B cell (primary cell): ENCODE measurements at regions of chr21 and their contacts with region 1.

Region 1: DNA sequence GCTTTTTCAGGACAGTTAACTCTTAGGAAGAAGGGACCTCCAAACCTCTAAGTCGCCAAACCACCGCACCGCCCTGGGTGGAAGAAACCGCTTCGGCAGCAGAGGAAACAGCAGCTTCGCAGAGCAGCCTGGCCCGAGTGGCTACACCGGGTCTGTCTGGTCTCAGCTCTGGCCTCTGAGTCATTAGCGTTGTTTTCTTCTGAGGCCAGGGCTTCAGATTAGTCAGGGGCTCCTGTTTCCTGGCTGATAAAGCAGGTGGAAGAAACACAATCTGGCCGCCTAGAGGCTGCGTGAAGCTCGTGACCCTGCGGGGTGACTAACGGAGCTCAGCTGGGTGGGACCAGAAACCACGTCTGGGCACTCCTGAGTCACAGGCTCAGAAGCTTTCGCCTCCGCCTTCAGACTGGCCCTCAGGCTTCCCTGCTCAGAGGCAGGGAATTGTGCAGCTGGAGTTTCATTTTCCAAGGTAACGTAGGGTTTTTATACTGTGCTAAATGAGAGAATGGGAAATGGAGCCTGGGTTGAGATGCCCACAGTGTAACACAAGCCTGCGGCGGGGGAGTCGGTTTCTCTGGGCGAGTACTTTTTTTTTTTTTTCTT is 44.9 kb downstream of the CHAF1B start:
- DNase-seq: peak; percentile 62
- ATAC-seq: peak; percentile 94
- H3K4me3 ChIP-seq: peak overlapping the region in 4 of 5 experiments; percentile 0 to 50 (median 40)
- H3K4me3 Mint-ChIP-seq: peak overlapping the region; percentile 88
- H3K27ac ChIP-seq: no peak overlapping the region
- H3K27ac Mint-ChIP-seq: peak overlapping the region; percentile 95
- H3K4me1 ChIP-seq: peaks cover 12 to 13% of the 10 kb centered on the region in 2 donors
- H3K4me1 Mint-ChIP-seq: peaks cover 20% of the 10 kb centered on the region
- H3K27me3 ChIP-seq: peaks cover 0 to 22% (median 5%) of the 10 kb centered on the region in 4 experiments
- H3K27me3 Mint-ChIP-seq: peaks cover 36% of the 10 kb centered on the region
- CTCF ChIP-seq: no peak

Region 2: GRCh38 chr21:36419996-36420395 is 10.1 kb before region 1 on chr21:
- CTCF ChIA-PET with region 1: interaction called, 3 read pairs
- POLR2A ChIA-PET with region 1: no interaction called
- intact Hi-C with region 1: loop called (anchors 1 kb)
- DNase-seq: peak; percentile 52
- ATAC-seq: peak; percentile 58
- H3K4me3 ChIP-seq: no peak overlapping the region
- H3K4me3 Mint-ChIP-seq: no peak overlapping the region
- H3K27ac ChIP-seq: no peak overlapping the region
- H3K27ac Mint-ChIP-seq: no peak overlapping the region
- H3K4me1 ChIP-seq: no peaks in the 10 kb centered on the region
- H3K4me1 Mint-ChIP-seq: peaks cover 1% of the 10 kb centered on the region
- H3K27me3 ChIP-seq: no peaks in the 10 kb centered on the region
- H3K27me3 Mint-ChIP-seq: no peaks in the 10 kb centered on the region
- CTCF ChIP-seq: peak; percentile 62

Region 3: DNA sequence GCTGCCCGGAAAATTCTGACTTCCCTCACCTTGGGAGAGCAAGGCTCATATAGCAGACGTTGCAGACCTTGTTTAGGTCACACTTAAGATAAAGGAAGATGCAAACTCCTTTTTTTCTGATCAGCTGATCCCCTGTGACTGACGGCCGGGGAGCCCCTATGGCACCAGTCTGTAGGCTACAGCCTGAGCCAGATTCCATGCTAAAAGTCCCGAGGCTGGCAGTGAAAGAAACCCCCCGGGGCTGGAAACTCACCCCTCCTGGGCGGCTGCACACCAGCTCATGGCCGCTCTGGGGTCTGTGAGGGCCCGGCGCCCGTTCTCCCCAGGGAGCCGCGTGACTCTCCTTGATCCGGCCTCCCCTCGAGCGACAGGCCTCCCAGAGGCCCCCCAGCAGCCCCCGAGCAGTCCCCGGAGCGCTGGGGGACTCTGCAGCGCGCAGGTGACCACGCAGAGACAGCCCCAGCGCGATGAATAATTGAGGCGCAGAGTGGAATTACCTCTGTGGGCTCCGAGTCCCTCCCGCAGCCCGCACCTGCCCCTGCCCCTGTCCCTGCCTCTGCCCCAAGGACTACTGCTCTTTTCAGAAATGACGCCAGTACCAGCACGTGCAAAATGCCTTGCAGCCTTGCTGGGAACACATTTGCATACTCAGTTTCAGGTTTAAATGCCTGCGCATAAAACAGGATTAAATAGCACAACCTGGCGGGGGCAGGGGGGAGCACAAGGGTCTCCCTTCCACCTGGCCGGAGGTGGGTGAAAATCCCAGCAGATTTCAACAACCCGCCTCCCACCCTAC is 112.5 kb after region 1 on chr21:
- CTCF ChIA-PET with region 1: no interaction called
- POLR2A ChIA-PET with region 1: no interaction called
- intact Hi-C with region 1: no loop called
- DNase-seq: peak; percentile 28
- ATAC-seq: peak; percentile 41
- H3K4me3 ChIP-seq: no peak overlapping the region
- H3K4me3 Mint-ChIP-seq: no peak overlapping the region
- H3K27ac ChIP-seq: no peak overlapping the region
- H3K27ac Mint-ChIP-seq: no peak overlapping the region
- H3K4me1 ChIP-seq: peaks cover 0 to 8% of the 10 kb centered on the region in 2 donors
- H3K4me1 Mint-ChIP-seq: peaks cover 3% of the 10 kb centered on the region
- H3K27me3 ChIP-seq: peaks cover 0 to 8% (median 3%) of the 10 kb centered on the region in 4 experiments
- H3K27me3 Mint-ChIP-seq: peaks cover 17% of the 10 kb centered on the region
- CTCF ChIP-seq: no peak